ENCODE measurements at regions of chr3 and their contacts with region 1.

Region 1: DNA sequence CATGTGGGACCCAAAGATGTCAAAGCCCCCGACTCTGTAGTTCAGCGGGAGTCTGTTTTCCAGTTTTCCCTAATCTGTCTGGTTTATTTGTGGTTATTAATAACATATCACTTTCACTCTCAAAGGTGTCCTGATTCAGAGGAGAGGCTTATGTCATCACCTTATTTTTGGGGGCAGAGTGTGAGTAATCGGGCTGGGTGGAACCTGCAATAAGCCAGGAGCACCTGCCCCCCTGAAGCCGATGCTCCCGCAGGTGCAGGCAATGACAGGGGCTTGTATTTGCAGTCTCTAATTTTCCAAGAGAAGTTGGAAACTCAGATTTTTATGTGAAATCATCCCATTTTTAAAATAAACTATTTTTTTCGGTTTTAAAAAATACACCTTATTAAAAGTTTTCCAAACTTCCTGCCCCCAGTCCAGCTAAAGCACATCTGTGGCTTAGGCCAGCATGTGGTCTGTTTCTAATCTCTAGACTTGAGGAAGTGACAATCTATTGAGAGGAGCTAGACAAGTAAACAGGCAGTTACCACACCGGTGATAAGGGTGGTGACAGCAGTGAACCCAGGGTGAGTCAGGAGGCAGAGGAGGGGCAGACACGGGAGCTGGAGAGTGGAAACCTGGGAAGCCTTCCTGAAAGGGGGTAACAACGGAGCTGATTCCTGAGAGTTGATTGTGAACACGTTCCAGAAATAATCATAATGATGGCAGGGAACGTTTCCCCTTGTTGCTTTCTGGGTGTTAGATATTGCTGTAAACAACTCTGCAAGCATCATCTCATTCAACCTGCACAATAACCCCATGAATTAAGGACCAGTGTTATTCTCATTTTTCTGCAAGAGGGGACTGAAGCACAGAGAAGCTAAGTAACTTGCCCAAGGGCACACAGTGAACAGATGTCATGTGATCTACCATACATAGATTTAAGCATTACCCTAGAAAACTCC is 37.3 kb downstream of the BHLHE40 start:
- DNase-seq: peak; percentile 79 to 94 (median 86)
- ATAC-seq: peak; percentile 75
- H3K4me3 ChIP-seq: no peak overlapping the region
- H3K27ac ChIP-seq: peak overlapping the region; percentile 61
- H3K4me1 ChIP-seq: peaks cover 88 to 90% of the 10 kb centered on the region in 2 experiments
- H3K27me3 ChIP-seq: no peaks in the 10 kb centered on the region; a peak in 1 of 5 replicates
- CTCF ChIP-seq: no peak; a peak in 1 of 6 replicates
- EP300 ChIP-seq: peak; percentile 100
- POLR2A ChIP-seq: no peak
- RAD21 ChIP-seq: peak; percentile 25 to 36; a peak in 2 of 4 replicates

Region 2: DNA sequence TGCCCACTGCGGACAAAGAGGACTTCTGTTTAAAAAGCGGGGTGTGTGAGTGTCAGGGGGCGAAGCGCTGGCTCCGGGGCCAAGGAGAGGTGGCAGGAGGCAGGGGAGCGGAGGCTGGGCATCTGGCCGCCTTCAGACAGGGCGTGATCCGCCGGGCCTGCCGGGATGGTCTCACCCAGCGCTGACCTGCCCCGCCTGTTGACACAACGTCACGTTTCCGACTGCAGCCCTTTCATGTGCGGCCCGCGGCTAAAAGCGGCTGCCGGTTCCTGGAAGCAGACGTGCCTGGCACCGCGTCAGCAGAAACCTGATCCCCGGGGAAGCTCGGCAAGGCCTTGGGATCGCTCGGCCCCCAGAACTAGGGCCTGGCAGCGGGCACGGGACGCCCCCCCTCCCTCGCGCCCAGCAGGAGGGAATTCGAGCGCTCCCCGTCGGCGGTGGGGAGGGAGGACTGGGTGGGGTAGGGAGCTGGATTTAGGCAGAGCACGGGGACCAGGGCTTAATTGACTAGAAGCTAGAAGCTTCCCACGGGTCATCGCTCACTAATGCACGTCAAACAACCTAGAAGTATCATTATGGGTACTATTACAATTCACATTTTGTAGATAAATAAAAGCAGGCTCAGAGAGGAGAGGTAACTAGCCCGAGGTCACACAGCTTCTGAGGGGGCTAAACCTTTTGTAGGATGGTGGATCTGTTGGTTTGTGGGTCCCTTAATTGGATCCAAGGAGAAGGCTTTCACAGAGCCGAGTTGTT is 29.5 kb before region 1 on chr3:
- CTCF ChIA-PET with region 1: no interaction called
- POLR2A ChIA-PET with region 1: interaction called, 38 read pairs
- in situ Hi-C with region 1: loop called (anchors 5 kb)
- intact Hi-C with region 1: no loop called
- DNase-seq: peak; percentile 61 to 97 (median 76)
- ATAC-seq: peak; percentile 84
- H3K4me3 ChIP-seq: peak overlapping the region; percentile 41
- H3K27ac ChIP-seq: peak overlapping the region; percentile 83
- H3K4me1 ChIP-seq: peaks cover 49 to 75% of the 10 kb centered on the region in 2 experiments
- H3K27me3 ChIP-seq: no peaks in the 10 kb centered on the region
- CTCF ChIP-seq: no peak
- EP300 ChIP-seq: peak; percentile 66
- POLR2A ChIP-seq: peak; percentile 78
- RAD21 ChIP-seq: peak in 1 of 2 experiments; percentile 26; a peak in 1 of 4 replicates

Region 3: DNA sequence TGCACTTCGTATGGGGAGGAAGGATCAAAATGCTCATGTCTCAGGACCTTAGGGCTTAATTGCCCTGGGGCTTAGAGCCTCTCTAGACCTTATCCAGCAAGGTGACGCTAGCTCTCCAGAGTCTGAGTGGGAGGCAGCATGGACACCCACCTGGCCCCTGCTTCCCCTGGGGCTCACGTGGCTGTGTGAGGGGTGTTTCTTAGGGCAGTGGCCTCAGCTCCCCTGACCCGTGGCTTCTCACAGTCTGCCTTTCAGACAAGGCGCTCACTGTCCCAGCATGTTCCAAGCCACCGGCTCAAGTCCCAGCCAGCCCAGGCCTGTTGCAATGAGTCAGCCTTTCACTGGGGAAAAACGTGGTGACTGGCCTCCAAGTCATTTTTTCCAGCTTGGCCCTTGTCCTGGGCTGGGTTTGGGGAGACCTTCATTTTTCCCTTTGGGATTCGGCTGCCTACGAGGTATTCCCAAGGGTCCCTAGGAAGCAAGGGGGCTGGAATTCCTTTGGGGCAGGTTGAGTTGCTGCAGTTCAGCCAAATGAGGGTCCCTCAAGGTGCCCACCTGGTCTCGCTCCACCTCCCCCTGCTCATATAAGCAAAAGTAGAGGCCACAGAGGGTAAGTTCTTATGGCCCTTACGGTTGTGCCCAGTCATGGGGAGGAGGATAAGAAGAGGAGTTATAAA is 21.5 kb before region 1 on chr3:
- CTCF ChIA-PET with region 1: no interaction called
- POLR2A ChIA-PET with region 1: interaction called, 11 read pairs
- in situ Hi-C with region 1: no loop called
- intact Hi-C with region 1: no loop called
- DNase-seq: peak; percentile 76 to 94 (median 78)
- ATAC-seq: peak; percentile 87
- H3K4me3 ChIP-seq: no peak overlapping the region
- H3K27ac ChIP-seq: peak overlapping the region; percentile 95
- H3K4me1 ChIP-seq: peaks cover 36 to 63% of the 10 kb centered on the region in 2 experiments
- H3K27me3 ChIP-seq: no peaks in the 10 kb centered on the region
- CTCF ChIP-seq: no peak
- EP300 ChIP-seq: peak; percentile 62
- POLR2A ChIP-seq: peak; percentile 82
- RAD21 ChIP-seq: peak in 1 of 2 experiments; percentile 30; a peak in 3 of 4 replicates

Region 4: DNA sequence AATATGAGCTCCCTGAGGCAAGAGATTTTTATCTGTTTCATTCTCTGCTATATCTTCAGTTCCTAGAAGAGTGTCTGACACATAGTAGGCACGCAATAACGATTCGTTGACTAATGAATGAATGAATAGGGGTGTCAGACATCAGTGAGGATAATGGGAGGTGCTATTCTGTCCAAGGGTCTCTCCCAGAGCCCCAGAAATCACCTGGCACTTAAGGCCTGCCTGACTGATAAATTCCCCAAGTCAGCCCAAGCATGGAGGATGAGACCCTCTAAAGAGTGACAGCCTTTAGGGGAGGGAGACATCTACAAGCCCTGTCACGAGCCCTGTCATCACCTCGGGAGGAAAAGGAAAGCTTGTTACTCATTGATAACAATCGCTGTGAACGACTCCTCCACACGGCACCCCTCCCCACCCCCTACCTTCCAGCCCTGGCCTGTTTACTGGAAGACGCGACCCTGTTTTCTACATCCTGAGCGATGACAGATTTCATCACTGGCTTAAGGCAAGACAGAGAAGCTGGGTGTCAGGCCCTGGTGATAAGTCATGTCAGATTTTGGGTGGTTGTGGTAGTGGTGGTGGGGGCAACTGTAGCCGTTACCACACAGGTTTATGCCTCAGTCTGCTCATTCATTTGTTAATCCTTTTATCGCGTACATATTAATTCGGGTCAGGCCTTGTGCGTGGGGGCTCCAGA is 14.2 kb before region 1 on chr3:
- CTCF ChIA-PET with region 1: no interaction called
- POLR2A ChIA-PET with region 1: interaction called, 20 read pairs
- in situ Hi-C with region 1: no loop called
- intact Hi-C with region 1: loop called (anchors 1 kb)
- DNase-seq: peak; percentile 86 to 89 (median 88)
- ATAC-seq: peak; percentile 87
- H3K4me3 ChIP-seq: no peak overlapping the region
- H3K27ac ChIP-seq: peak overlapping the region; percentile 45; the same call in 2 of the 3 replicates
- H3K4me1 ChIP-seq: peaks cover 25 to 58% of the 10 kb centered on the region in 2 experiments
- H3K27me3 ChIP-seq: no peaks in the 10 kb centered on the region
- CTCF ChIP-seq: no peak
- EP300 ChIP-seq: peak; percentile 95
- POLR2A ChIP-seq: no peak
- RAD21 ChIP-seq: peak; percentile 33 to 37; a peak in 3 of 4 replicates

Region 5: DNA sequence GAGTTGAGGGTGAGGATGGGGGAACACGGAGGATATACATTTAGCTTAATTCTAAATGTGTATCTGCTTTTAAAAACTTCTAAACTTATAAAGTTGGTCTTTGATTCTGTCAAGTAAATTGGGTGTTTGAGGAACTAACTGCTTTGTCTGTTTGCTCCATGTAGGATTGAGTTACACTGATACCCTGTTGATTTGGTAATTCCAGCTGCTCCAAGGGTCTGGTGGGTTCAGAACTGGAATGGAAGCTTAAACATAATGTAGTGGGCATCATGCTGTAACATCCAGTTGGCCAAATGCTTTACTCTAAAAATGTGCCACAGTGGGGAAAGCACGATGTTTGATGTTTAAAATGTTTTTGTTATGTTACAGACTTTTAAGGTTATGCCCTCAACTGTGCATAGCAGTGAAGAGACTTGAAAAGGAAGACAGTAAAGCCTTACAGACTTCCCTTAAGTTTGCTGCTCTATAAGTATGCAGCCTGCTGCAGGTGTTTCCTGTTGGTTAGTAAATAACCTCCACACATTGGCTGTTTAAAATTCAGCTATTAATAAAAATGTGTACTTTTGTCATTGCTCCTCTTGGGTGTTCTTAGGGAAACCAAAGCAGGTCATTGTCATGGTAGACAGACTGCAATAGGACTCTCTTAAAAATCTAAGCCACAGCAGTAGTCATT is 165.1 kb after region 1 on chr3:
- CTCF ChIA-PET with region 1: no interaction called
- POLR2A ChIA-PET with region 1: no interaction called
- in situ Hi-C with region 1: no loop called
- intact Hi-C with region 1: no loop called
- DNase-seq: no peak
- ATAC-seq: no peak
- H3K4me3 ChIP-seq: no peak overlapping the region
- H3K27ac ChIP-seq: no peak overlapping the region
- H3K4me1 ChIP-seq: peaks cover 0 to 21% of the 10 kb centered on the region in 2 experiments; a peak in 3 of 5 replicates
- H3K27me3 ChIP-seq: no peaks in the 10 kb centered on the region
- CTCF ChIP-seq: no peak
- EP300 ChIP-seq: no peak
- POLR2A ChIP-seq: no peak
- RAD21 ChIP-seq: no peak

Measured in K562 (cell line).